MCF 10A (cell line): ENCODE measurements at regions of chr9 and their contacts with region 1.

Region 1: DNA sequence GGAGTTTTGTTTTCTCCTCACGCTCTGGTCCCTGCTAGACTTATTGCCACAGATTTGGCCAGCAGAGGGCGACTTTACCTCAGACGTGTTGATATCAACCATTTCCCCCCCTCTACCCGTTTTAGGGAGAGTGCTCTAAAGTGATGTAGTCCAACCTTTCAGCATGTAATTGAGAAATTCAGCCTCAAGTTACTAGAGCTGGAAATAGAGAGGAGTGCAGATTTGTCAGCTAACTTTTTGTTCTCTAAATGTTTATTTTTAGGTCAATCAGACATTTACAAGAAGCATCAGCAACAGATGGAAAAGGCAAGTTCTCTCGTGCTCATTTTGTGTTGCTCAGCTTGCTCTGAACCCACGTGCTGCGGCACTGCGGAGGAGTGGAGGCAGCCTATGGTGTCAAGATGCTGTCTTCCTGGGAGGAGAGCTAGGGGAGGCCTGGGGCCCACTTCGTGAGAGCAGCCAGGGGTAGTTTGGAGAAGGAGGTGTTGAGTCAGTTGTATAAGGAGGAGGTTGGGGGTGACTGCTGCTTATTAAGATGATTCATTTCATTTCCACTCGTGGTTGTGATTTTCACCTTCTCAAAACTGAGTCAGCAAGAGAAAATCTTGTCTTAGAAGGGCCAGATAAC is 53.6 kb downstream of the GPR107 start:
- DNase-seq: peak; percentile 84
- H3K4me3 Mint-ChIP-seq: no peak overlapping the region
- H3K27ac Mint-ChIP-seq: no peak overlapping the region
- H3K4me1 Mint-ChIP-seq: no peaks in the 10 kb centered on the region
- H3K27me3 Mint-ChIP-seq: no peaks in the 10 kb centered on the region
- CTCF ChIP-seq: peak; percentile 66

Region 2: GRCh38 chr9:130092910-130093309 is 14.4 kb before region 1 on chr9:
- CTCF ChIA-PET with region 1: interaction called, 11 read pairs
- POLR2A ChIA-PET with region 1: no interaction called
- intact Hi-C with region 1: no loop called
- DNase-seq: no peak
- H3K4me3 Mint-ChIP-seq: no peak overlapping the region
- H3K27ac Mint-ChIP-seq: no peak overlapping the region
- H3K4me1 Mint-ChIP-seq: no peaks in the 10 kb centered on the region
- H3K27me3 Mint-ChIP-seq: no peaks in the 10 kb centered on the region
- CTCF ChIP-seq: no peak

Region 3: DNA sequence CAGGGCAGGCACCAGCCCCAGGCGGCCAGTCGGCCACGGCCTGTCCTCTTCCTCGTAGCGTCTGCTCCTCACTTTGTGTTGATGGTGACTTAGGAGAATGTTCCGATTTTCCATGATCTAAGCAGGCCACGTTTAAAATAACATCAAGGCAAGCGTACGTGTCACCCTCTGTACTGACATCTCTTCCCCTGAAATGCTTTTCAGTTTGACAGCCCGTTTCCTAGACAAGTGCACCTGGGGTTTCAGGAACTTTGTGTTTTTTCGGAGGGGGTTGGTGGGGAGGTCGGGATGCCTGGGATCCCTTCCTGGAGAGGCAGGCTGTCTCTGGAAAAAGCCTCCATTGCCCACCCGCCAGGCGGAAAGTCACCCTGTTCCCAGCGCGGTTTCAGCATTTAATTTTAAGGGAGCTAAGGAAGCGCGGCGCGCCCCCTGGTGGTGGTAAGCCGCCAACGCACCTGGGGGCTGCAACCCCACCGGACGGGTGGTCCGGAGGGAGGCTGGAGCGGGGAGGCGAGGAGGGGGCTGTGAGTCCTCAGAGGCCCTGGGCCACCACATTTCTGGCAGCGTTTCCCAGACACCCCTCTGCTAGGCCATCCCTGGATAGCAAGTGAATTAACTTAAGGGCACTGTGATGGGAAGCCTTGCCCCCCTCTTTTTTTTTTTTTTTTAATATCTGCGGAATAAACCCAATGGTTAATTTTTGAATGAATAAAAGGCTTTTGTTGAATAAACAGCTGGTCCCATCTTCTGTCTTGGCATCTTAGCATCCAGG is 128.7 kb after region 1 on chr9:
- CTCF ChIA-PET with region 1: interaction called, 62 read pairs
- POLR2A ChIA-PET with region 1: interaction called, 5 read pairs
- intact Hi-C with region 1: loop called (anchors 1 kb)
- DNase-seq: peak; percentile 49
- H3K4me3 Mint-ChIP-seq: no peak overlapping the region
- H3K27ac Mint-ChIP-seq: no peak overlapping the region
- H3K4me1 Mint-ChIP-seq: peaks cover 5% of the 10 kb centered on the region
- H3K27me3 Mint-ChIP-seq: no peaks in the 10 kb centered on the region
- CTCF ChIP-seq: peak; percentile 98

Region 4: GRCh38 chr9:130243015-130243734 is 135.8 kb after region 1 on chr9:
- CTCF ChIA-PET with region 1: interaction called, 62 read pairs
- POLR2A ChIA-PET with region 1: interaction called, 3 read pairs
- intact Hi-C with region 1: no loop called
- DNase-seq: peak; percentile 64
- H3K4me3 Mint-ChIP-seq: peak overlapping the region; percentile 45
- H3K27ac Mint-ChIP-seq: peak overlapping the region; percentile 84
- H3K4me1 Mint-ChIP-seq: peaks cover 11% of the 10 kb centered on the region
- H3K27me3 Mint-ChIP-seq: no peaks in the 10 kb centered on the region
- CTCF ChIP-seq: peak; percentile 93

Region 5: DNA sequence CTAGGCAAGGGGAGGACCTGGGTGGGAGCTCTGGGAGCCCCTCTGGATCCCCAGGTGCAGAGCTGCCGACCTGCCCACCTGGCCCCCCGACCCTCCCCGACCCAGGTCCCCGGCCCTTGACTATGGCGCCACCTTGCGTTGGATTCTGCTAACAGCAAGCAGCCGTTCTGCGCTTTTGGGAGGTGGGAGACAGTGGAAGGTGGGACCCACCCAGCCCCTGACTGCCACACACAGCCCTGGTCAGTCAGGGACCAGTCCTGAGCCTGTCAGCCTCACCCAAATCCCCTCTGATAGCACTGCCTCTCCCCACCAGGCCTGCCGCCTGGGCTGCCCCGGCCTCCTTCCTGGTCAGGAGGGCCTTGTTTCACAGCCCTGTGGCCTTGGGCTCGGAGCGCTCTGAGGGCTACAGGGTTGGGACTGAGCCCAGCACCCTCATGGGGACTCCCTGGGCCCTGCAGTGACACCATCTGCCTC is 236.1 kb after region 1 on chr9:
- CTCF ChIA-PET with region 1: interaction called, 13 read pairs
- POLR2A ChIA-PET with region 1: no interaction called
- intact Hi-C with region 1: loop called (anchors 2 kb)
- DNase-seq: peak; percentile 17
- H3K4me3 Mint-ChIP-seq: no peak overlapping the region
- H3K27ac Mint-ChIP-seq: no peak overlapping the region
- H3K4me1 Mint-ChIP-seq: no peaks in the 10 kb centered on the region
- H3K27me3 Mint-ChIP-seq: no peaks in the 10 kb centered on the region
- CTCF ChIP-seq: peak; percentile 82